ENCODE measurements at regions of chr13 and their contacts with region 1.

Region 1: GRCh38 chr13:110412132-110412914 is 105.2 kb downstream of the COL4A2 start:
- DNase-seq: peak; percentile 66 to 95 (median 85)

Region 2: GRCh38 chr13:110220471-110220870 is 191.9 kb before region 1 on chr13:
- intact Hi-C with region 1: loop called (anchors 5 kb)
- DNase-seq: no peak

Region 3: DNA sequence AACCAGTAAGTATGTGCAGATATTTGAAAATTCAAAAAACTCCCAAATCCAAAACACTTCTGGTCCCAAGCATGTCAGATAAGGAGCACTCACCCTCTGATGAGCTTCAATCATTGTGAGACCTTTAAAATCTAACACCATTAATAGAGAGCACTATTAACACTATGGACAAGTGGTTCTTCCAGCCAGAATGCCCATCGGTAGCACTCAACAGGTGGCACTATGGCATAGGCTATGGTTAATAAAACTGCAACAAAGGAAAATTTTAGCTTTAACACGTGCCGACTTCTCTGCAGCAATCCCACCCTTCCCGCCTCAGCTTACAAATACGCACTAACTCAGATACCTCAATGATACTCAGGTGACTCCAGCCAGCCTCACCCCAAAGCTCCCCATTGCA is 42.9 kb before region 1 on chr13:
- intact Hi-C with region 1: loop called (anchors 5 kb)
- DNase-seq: peak in 2 of 42 donors; percentile 10 to 16